ENCODE measurements at regions of chr4 and their contacts with region 1.

Region 1: DNA sequence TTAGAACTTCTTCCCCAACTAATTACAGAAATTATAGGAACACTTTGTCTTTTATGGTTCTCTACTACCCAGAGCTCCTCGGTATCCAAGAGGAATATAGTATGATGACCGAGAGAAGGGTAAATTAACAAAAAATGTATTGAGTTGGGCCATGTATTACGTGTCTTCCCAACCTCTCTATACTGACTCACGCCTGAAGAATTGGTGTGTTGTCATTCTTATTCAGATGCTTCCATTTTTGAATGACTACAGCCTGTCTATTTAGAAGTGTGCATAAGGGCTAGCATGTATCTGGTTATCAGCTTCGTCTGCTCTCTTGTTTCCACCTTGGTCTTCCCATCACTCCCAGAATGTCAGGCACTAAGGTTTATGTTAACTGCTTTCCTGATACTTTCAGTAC is 24.5 kb upstream of the SCD5 start:
- DNase-seq: no peak
- H3K4me3 ChIP-seq: no peak overlapping the region
- H3K27ac ChIP-seq: no peak overlapping the region
- H3K4me1 ChIP-seq: no peaks in the 10 kb centered on the region
- H3K27me3 ChIP-seq: no peaks in the 10 kb centered on the region
- CTCF ChIP-seq: no peak
- POLR2A ChIP-seq: no peak

Region 2: DNA sequence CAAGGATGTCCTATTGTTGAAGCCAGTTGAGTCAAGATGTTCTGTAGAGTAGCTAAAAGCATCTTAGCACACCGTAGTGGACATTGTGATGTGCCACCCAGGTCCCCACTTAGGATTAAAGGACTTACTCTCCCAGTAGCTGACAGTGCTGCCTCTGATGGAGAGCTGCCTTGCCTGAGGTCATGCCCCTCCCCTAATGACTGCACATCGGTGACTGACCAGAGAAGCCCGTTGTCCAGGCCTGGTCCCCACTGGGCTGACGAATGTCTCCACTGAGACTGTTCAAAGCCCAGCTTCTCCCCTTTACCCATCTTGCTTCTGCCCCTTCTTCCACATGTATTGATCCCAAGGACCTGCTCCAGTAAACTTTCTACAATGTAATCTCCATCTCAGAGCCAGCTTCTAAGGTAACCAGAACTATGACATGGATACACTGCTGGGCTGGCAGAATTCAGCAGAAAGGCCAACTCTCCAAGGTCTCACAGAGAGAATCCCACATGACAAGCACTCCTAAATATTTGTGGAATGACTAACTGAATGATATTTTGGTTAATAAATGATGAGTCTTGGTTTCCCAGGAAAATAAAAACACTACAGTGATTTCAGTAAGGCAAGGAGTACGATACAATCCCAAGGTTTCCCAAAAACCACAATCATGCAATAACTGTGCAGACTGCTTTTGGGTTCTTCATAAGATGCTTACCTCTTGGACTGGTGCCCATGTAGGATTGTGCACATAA is 178.9 kb before region 1 on chr4:
- intact Hi-C with region 1: no loop called
- DNase-seq: no peak
- H3K4me3 ChIP-seq: no peak overlapping the region
- H3K27ac ChIP-seq: no peak overlapping the region
- H3K4me1 ChIP-seq: peaks cover 15 to 18% of the 10 kb centered on the region in 2 donors
- H3K27me3 ChIP-seq: no peaks in the 10 kb centered on the region
- CTCF ChIP-seq: no peak
- POLR2A ChIP-seq: no peak

Region 3: GRCh38 chr4:82865592-82865991 is 42.5 kb after region 1 on chr4:
- intact Hi-C with region 1: loop called (anchors 10 kb)
- DNase-seq: no peak
- H3K4me3 ChIP-seq: no peak overlapping the region
- H3K27ac ChIP-seq: peak overlapping the region in 1 of 3 donors; percentile 32
- H3K4me1 ChIP-seq: peaks cover 0 to 2% of the 10 kb centered on the region in 2 donors
- H3K27me3 ChIP-seq: no peaks in the 10 kb centered on the region
- CTCF ChIP-seq: no peak
- POLR2A ChIP-seq: no peak

Region 4: GRCh38 chr4:83189631-83190136 is 366.6 kb after region 1 on chr4:
- intact Hi-C with region 1: no loop called
- DNase-seq: no peak
- H3K4me3 ChIP-seq: no peak overlapping the region
- H3K27ac ChIP-seq: no peak overlapping the region
- H3K4me1 ChIP-seq: no peaks in the 10 kb centered on the region
- H3K27me3 ChIP-seq: no peaks in the 10 kb centered on the region
- CTCF ChIP-seq: no peak
- POLR2A ChIP-seq: no peak